Endothelial cell of umbilical vein (primary cell): ENCODE measurements at regions of chr22 and their contacts with region 1.

Region 1: DNA sequence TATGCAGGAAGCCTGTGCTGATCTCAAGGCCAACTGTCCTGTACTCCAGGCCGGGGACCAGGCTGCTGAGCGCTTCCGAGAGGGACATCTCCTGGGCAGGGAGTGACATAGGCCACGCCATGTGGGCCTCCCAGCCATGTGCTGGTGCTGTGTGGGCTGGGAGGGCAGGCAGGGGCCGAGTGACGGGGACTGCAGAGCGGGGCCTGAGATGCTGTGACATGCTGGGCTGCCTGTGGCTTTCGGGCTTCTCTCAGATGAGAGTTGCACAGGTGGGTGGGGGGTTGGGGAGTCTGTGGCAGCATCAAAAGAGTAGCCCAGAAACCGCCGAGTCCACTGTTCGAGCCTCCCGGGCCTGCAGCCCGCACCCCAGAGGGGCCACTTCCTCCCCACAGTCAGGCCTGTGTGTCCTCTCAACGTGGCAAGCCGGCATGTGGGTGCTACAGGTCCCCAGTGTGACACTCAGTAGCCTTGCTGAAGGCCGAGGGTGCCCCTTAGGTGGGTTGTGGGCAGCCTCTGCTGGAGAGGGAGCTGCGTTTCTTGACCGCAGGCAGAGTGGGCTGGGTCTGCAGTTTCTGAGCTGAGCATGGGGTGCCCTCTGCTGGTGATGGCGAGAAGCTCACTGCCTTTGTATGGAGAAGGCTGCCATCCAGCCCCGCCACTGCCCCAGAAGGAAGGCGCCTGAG is 101.2 kb downstream of the BCR start:
- DNase-seq: peak; percentile 84
- H3K4me3 ChIP-seq: no peak overlapping the region
- H3K27ac ChIP-seq: peak overlapping the region; percentile 75
- H3K4me1 ChIP-seq: peaks cover 30% of the 10 kb centered on the region
- H3K27me3 ChIP-seq: no peaks in the 10 kb centered on the region
- CTCF ChIP-seq: peak; percentile 90 to 94
- POLR2A ChIP-seq: no peak

Region 2: GRCh38 chr22:22981670-22982571 is 299.6 kb before region 1 on chr22:
- CTCF ChIA-PET with region 1: no interaction called
- POLR2A ChIA-PET with region 1: no interaction called
- dilution Hi-C with region 1: no loop called
- intact Hi-C with region 1: no loop called
- DNase-seq: no peak
- H3K4me3 ChIP-seq: no peak overlapping the region
- H3K27ac ChIP-seq: no peak overlapping the region
- H3K4me1 ChIP-seq: no peaks in the 10 kb centered on the region
- H3K27me3 ChIP-seq: peaks cover 7 to 8% of the 10 kb centered on the region in 2 experiments
- CTCF ChIP-seq: no peak
- POLR2A ChIP-seq: no peak

Region 3: DNA sequence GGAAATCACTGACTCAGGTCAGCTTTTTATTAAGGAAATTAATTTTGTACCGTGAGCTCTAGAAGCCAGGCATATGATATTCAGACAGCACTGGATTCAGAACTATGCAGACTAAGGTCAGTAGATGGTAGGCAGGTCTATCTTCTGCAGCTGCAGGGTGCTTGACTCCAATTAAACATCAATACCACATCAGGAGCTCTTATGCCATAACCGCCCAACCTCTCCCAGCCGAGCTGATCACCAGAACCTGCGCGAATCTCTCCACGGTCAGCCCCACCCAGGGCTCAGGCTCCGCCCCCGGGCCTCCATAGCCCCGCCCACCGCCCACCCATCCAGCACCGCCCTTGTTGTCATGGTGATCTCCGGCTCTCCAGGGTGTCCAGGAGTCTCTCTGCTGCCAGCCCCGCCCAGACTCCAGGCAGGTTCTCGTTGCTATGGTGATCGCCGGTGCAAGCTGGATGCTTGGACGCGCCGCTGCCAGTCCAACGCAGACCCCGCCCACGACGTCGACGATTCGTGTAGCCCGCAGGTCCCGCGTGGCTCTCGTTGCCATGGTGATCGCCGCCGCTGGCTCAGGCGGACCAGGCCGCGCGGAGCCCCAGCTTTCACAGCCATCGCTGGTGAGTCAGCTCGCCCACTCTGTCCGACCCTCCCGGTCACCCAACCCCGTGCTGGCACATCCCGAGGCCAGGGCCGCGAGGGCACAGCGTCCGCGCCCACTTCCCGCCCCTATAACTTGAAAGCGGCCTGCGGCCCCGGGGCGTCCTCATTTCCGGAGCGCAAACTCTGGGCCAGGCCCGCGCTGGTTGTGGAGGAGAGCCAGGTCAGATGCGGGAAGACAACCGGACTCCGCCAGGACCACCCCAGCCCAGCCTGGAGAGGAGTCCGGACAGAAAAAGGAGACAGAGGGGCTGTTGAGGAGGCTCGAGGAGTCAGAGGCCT is 136.3 kb before region 1 on chr22 and contains the start of gene RAB36:
- CTCF ChIA-PET with region 1: interaction called, 16 read pairs
- POLR2A ChIA-PET with region 1: no interaction called
- dilution Hi-C with region 1: no loop called
- intact Hi-C with region 1: no loop called
- DNase-seq: peak; percentile 95
- H3K4me3 ChIP-seq: peak within 1 kb of the TSS; percentile 25 to 35 (median 26)
- H3K27ac ChIP-seq: peak within 1 kb of the TSS; percentile 26
- H3K4me1 ChIP-seq: peaks cover 9% of the 10 kb centered on the region
- H3K27me3 ChIP-seq: no peaks in the 10 kb centered on the region
- CTCF ChIP-seq: no peak
- POLR2A ChIP-seq: no peak
- total RNA-seq, gene RAB36: 2.6 and 2.7 TPM in 2 replicates

Region 4: DNA sequence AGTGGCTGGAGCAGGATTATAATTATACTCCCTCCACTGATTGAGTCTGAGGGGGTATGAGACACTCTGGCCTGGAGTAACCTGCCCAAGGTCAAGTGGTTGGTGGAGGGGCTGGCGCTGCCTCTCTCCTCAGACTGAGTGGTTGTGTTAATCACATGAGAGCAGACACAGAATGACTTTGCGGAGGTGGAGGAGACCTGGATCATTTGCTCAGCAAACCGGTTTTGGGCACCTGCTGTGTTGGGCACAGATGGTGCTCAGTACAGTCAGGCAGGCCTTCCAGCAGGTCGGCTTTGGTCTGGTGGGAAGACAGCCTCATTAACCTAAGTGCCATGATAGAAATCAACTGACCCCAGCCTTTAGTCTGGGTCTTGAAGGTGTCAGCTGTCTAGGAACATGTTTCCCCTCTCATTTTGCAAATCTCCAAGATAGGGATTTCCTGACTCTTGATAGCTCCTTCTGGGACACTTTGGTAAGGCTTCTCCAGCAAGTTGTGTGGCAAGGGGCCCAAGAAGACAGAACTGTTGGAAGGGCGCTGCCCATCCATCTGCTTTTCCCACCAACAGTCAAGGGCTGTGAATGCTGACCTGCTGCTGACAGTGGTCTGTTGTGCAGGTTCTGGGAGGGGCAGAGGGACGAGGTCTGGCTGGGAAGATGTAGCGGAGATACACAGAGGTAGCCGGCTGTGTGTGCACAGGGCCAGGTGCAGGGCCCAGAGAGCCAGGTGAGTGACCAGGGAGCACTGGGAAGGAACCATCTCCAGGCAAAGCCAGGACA is 89.2 kb before region 1 on chr22:
- CTCF ChIA-PET with region 1: interaction called, 22 read pairs
- POLR2A ChIA-PET with region 1: no interaction called
- dilution Hi-C with region 1: no loop called
- intact Hi-C with region 1: no loop called
- DNase-seq: no peak
- H3K4me3 ChIP-seq: no peak overlapping the region
- H3K27ac ChIP-seq: no peak overlapping the region
- H3K4me1 ChIP-seq: peaks cover 16% of the 10 kb centered on the region
- H3K27me3 ChIP-seq: no peaks in the 10 kb centered on the region
- CTCF ChIP-seq: no peak
- POLR2A ChIP-seq: no peak

Region 5: GRCh38 chr22:23240639-23241389 is 40.7 kb before region 1 on chr22:
- CTCF ChIA-PET with region 1: interaction called, 18 read pairs
- POLR2A ChIA-PET with region 1: no interaction called
- dilution Hi-C with region 1: no loop called
- intact Hi-C with region 1: loop called (anchors 1 kb)
- DNase-seq: peak; percentile 93
- H3K4me3 ChIP-seq: no peak overlapping the region
- H3K27ac ChIP-seq: peak overlapping the region; percentile 70
- H3K4me1 ChIP-seq: peaks cover 28% of the 10 kb centered on the region
- H3K27me3 ChIP-seq: no peaks in the 10 kb centered on the region
- CTCF ChIP-seq: peak; percentile 75 to 77
- POLR2A ChIP-seq: no peak

Region 6: GRCh38 chr22:23270212-23270733 is 11.3 kb before region 1 on chr22:
- CTCF ChIA-PET with region 1: interaction called, 14 read pairs
- POLR2A ChIA-PET with region 1: no interaction called
- dilution Hi-C with region 1: no loop called
- intact Hi-C with region 1: no loop called
- DNase-seq: no peak
- H3K4me3 ChIP-seq: no peak overlapping the region
- H3K27ac ChIP-seq: no peak overlapping the region
- H3K4me1 ChIP-seq: no peaks in the 10 kb centered on the region
- H3K27me3 ChIP-seq: no peaks in the 10 kb centered on the region
- CTCF ChIP-seq: no peak
- POLR2A ChIP-seq: no peak